Panc1 (cell line): ENCODE measurements at regions of chr22 and their contacts with region 1.

Region 1: GRCh38 chr22:39123751-39124601 is 26.9 kb downstream of the APOBEC3H start:
- DNase-seq: no peak
- ATAC-seq: no peak
- H3K4me3 ChIP-seq: no peak overlapping the region
- H3K27ac ChIP-seq: no peak overlapping the region
- H3K4me1 ChIP-seq: no peaks in the 10 kb centered on the region
- H3K27me3 ChIP-seq: no peaks in the 10 kb centered on the region
- CTCF ChIP-seq: no peak

Region 2: DNA sequence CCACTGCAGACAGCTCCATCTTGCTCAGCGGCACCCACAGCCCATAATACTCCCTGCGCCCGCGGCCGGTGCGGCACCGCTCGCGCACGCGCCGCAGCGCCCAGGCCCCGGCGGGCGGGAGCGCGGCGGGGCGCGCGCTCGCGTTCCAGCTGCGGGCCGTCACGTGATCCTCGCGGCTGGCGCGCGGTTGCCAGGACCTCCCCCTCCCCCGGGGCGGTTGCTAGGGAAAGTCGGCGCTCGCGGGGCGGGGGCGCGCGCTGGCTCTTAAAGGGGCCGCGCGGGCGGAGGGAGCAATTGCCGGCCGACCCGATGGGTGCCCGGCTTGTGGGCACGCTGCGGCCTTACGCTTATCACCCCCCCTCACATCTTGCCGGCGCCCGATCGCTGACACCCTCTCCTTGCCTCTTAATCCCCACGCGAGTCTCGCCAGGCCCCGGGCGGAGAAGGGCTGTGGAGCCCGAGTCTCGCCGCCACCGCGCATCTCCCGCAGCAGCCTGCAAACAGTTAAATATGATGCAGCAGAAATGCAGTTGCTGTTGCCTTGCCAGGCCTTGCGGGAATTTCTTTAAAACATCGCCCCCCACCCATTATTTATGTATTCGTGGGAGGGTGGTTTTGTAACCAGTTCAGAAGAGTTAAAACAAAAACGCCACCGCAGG is 251.7 kb before region 1 on chr22 and contains the start of gene CBX6:
- CTCF ChIA-PET with region 1: interaction called, 3 read pairs
- POLR2A ChIA-PET with region 1: no interaction called
- in situ Hi-C with region 1: no loop called
- intact Hi-C with region 1: loop called (anchors 5 kb)
- DNase-seq: no peak
- ATAC-seq: peak; percentile 86
- H3K4me3 ChIP-seq: peak within 1 kb of the TSS; percentile 63 to 74
- H3K27ac ChIP-seq: peak within 1 kb of the TSS; percentile 83
- H3K4me1 ChIP-seq: peaks cover 23% of the 10 kb centered on the region
- H3K27me3 ChIP-seq: no peaks in the 10 kb centered on the region
- CTCF ChIP-seq: no peak
- total RNA-seq, gene CBX6: 98.4 TPM

Region 3: GRCh38 chr22:39220897-39221850 is 97.2 kb after region 1 on chr22:
- CTCF ChIA-PET with region 1: no interaction called
- POLR2A ChIA-PET with region 1: no interaction called
- in situ Hi-C with region 1: no loop called
- intact Hi-C with region 1: no loop called
- DNase-seq: no peak
- ATAC-seq: peak; percentile 37
- H3K4me3 ChIP-seq: no peak overlapping the region
- H3K27ac ChIP-seq: no peak overlapping the region
- H3K4me1 ChIP-seq: no peaks in the 10 kb centered on the region; the same call in 1 of the 2 replicates
- H3K27me3 ChIP-seq: no peaks in the 10 kb centered on the region
- CTCF ChIP-seq: no peak